Gastrocnemius medialis (tissue), 4 donors: ENCODE measurements at regions of chr7 and their contacts with region 1.

Region 1: GRCh38 chr7:32942786-32943653 is 14.2 kb upstream of the FKBP9 start:
- DNase-seq: peak; percentile 52 to 70
- ATAC-seq: peak; percentile 88 to 90
- H3K4me3 ChIP-seq: peak overlapping the region; percentile 71 to 91 (median 80)
- H3K27ac ChIP-seq: peak overlapping the region; percentile 82 to 94 (median 91)
- H3K4me1 ChIP-seq: peaks cover 12 to 23% of the 10 kb centered on the region in 2 donors
- H3K27me3 ChIP-seq: no peaks in the 10 kb centered on the region
- CTCF ChIP-seq: peak; percentile 69 to 87 (median 77)
- POLR2A ChIP-seq: peak; percentile 38 to 39

Region 2: DNA sequence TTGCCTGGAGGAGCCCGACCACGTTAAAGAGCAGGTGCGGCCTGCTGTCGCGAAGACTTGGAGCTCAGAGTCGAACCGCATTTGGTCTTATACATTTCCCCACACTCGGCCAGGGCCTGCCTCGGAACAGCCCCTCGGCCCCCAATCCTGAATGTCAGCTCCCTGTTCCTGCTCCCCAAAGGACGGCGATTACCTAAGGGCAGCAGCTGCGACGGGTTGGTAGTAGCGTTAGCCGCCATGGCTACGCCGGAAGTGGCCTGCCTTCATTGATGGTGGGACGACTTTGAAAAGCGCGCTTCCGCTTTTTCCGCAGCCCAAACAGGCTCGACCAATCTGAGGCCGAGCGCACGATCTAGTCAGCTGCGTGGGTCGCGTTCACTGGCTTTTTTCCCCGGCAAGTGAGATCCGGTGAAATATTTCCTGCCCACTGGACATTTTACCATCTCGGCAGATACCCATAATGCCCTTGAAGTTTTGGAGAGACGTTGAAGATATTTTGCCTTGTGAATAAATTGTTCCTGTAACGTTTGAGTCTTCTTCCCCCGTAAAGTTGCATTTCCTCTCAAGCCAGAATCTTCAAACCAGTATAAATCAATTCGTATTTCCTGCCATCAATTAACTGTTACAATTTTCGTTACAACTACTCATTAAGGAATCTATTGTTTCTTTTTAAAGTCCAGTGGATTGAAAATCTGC is 452.7 kb before region 1 on chr7 and contains the start of gene LSM5:
- in situ Hi-C with region 1: no loop called
- intact Hi-C with region 1: loop called (anchors 5 kb)
- DNase-seq: peak; percentile 86 to 90
- ATAC-seq: peak; percentile 93
- H3K4me3 ChIP-seq: peak within 1 kb of the TSS; percentile 71 to 84 (median 82)
- H3K27ac ChIP-seq: peak within 1 kb of the TSS; percentile 86 to 92 (median 88)
- H3K4me1 ChIP-seq: peaks cover 13 to 18% of the 10 kb centered on the region in 2 donors
- H3K27me3 ChIP-seq: no peaks in the 10 kb centered on the region
- CTCF ChIP-seq: no peak
- POLR2A ChIP-seq: peak in 1 of 2 donors; percentile 40
- total RNA-seq, gene LSM5: 11.7 to 28.7 (median 14.8) TPM

Region 3: DNA sequence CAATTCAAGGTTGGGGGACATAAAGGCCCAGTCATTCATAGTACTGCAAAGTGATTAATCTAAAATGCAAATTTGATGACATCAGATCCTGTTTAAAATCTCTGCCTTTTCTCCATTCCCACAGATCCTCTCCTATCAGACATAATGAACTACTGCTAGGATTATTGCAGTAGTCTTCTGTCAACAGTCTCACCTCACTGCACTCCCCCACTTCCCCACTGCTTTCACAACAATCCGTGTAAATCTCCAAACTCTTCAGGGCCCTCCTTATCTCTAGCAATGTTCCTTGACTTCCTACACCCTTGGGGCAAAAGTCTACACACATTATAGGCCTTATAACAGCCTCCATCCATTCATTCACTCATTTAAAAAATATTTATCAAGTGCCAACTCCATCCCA is 163.9 kb before region 1 on chr7:
- in situ Hi-C with region 1: no loop called
- intact Hi-C with region 1: no loop called
- DNase-seq: no peak
- ATAC-seq: no peak
- H3K4me3 ChIP-seq: no peak overlapping the region
- H3K27ac ChIP-seq: no peak overlapping the region
- H3K4me1 ChIP-seq: no peaks in the 10 kb centered on the region
- H3K27me3 ChIP-seq: no peaks in the 10 kb centered on the region
- CTCF ChIP-seq: no peak
- POLR2A ChIP-seq: no peak

Region 4: DNA sequence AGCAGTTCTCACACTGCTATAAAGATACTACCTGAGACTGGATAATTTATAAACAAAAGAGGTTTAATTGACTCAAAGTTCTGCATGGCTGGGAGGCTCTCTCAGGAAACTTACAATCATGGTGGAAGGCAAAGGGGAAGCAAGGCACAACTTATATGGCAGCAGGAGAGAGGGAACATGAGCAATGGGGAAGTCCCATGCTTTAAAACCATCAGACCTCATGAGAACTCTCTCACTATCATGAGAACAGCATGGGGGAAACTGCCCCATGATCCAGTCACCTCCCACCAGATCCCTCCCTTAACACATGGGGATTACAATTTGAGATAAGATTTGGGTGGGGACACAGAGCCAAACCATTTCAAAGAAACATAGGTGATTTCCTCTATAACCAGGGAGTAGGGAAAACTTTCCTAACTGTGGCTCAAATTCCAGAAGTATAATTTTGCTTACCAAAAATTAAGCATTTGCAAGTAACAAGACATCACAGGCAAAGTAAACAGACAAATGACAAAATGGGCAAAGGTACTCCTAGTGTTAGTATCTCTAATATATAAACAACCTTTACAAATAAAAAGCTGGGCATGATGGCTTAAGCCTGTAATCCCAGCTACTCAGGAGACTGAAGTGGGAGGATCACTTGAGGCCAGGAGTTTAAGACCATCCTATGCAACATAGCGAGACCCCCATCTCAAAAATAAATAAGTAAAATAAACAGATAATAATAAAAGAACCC is 139.4 kb before region 1 on chr7:
- in situ Hi-C with region 1: no loop called
- intact Hi-C with region 1: loop called (anchors 1 kb)
- DNase-seq: no peak
- ATAC-seq: no peak
- H3K4me3 ChIP-seq: no peak overlapping the region
- H3K27ac ChIP-seq: no peak overlapping the region
- H3K4me1 ChIP-seq: no peaks in the 10 kb centered on the region
- H3K27me3 ChIP-seq: no peaks in the 10 kb centered on the region
- CTCF ChIP-seq: no peak
- POLR2A ChIP-seq: no peak

Region 5: GRCh38 chr7:32846701-32847100 is 96.3 kb before region 1 on chr7:
- in situ Hi-C with region 1: loop called in 2 of 4 experiments (anchors 10 to 25 kb)
- intact Hi-C with region 1: loop called (anchors 1 kb)
- DNase-seq: peak; percentile 76 to 88
- ATAC-seq: peak; percentile 99 to 100
- H3K4me3 ChIP-seq: peak overlapping the region in 1 of 4 donors; percentile 35
- H3K27ac ChIP-seq: no peak overlapping the region
- H3K4me1 ChIP-seq: no peaks in the 10 kb centered on the region
- H3K27me3 ChIP-seq: no peaks in the 10 kb centered on the region
- CTCF ChIP-seq: peak; percentile 88 to 95 (median 90)
- POLR2A ChIP-seq: no peak

Region 6: GRCh38 chr7:32957326-32958045 is 14.5 kb after region 1 on chr7 and contains the start of gene FKBP9:
- in situ Hi-C with region 1: no loop called
- intact Hi-C with region 1: loop called (anchors 1 kb)
- DNase-seq: peak; percentile 59 to 68
- ATAC-seq: peak; percentile 83 to 84
- H3K4me3 ChIP-seq: peak within 1 kb of the TSS; percentile 72 to 97 (median 84)
- H3K27ac ChIP-seq: peak within 1 kb of the TSS; percentile 76 to 93 (median 88)
- H3K4me1 ChIP-seq: peaks cover 8 to 16% of the 10 kb centered on the region in 2 donors
- H3K27me3 ChIP-seq: no peaks in the 10 kb centered on the region
- CTCF ChIP-seq: no peak
- POLR2A ChIP-seq: peak; percentile 44 to 59
- total RNA-seq, gene FKBP9: 32.1 to 72.1 (median 35.3) TPM

Region 7: DNA sequence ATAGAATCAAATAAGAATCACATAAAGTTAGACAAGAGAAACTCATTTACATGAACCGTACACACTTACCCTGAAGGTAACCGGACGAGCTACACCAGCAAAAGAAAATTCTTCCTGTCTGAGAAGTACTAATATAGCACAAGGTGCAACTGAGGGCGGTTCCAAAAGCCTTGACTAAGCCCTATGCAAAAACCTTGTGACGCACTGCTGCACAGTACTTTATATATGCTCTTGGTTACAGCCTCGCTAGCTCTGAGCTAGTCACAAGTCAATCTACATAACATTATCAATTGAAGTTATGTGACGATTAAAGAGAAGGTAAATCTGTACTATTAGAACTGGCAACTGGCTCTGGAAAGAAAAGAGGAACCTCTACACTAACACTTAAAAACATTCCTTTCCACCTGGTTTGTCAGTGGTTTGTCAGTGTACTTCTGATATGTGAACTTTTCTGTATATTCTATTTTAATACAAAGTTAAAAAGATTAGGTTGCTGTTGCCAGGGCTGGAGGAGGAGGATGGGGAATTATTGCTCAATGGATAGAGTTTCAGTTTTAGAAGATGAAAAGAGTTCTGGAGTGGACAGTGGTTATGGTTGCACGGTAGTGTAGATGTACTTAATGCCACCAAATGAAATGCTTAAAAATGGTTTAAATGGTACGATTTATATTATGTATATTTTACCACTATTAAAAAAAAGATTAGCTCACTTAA is 97.9 kb after region 1 on chr7:
- in situ Hi-C with region 1: no loop called
- intact Hi-C with region 1: loop called (anchors 2 kb)
- DNase-seq: peak; percentile 73
- ATAC-seq: peak; percentile 90 to 91
- H3K4me3 ChIP-seq: peak overlapping the region; percentile 54 to 68 (median 62)
- H3K27ac ChIP-seq: peak overlapping the region; percentile 84 to 95 (median 90)
- H3K4me1 ChIP-seq: peaks cover 55 to 61% of the 10 kb centered on the region in 2 donors
- H3K27me3 ChIP-seq: no peaks in the 10 kb centered on the region
- CTCF ChIP-seq: no peak
- POLR2A ChIP-seq: peak; percentile 71 to 92